Naive thymus-derived CD4-positive, alpha-beta T cell (primary cell): ENCODE measurements at regions of chr3 and their contacts with region 1.

Region 1: GRCh38 chr3:171213907-171214306 is 187.4 kb upstream of the SLC2A2 start:
- DNase-seq: no peak
- ATAC-seq: no peak
- H3K4me3 ChIP-seq: no peak overlapping the region
- H3K4me3 Mint-ChIP-seq: no peak overlapping the region
- H3K27ac ChIP-seq: no peak overlapping the region
- H3K27ac Mint-ChIP-seq: peak overlapping the region in 1 of 9 donors; percentile 71
- H3K4me1 ChIP-seq: peaks cover 0 to 3% of the 10 kb centered on the region in 2 donors
- H3K4me1 Mint-ChIP-seq: peaks cover 10 to 57% (median 39%) of the 10 kb centered on the region in 7 donors
- H3K27me3 ChIP-seq: no peaks in the 10 kb centered on the region
- H3K27me3 Mint-ChIP-seq: no peaks in the 10 kb centered on the region

Region 2: DNA sequence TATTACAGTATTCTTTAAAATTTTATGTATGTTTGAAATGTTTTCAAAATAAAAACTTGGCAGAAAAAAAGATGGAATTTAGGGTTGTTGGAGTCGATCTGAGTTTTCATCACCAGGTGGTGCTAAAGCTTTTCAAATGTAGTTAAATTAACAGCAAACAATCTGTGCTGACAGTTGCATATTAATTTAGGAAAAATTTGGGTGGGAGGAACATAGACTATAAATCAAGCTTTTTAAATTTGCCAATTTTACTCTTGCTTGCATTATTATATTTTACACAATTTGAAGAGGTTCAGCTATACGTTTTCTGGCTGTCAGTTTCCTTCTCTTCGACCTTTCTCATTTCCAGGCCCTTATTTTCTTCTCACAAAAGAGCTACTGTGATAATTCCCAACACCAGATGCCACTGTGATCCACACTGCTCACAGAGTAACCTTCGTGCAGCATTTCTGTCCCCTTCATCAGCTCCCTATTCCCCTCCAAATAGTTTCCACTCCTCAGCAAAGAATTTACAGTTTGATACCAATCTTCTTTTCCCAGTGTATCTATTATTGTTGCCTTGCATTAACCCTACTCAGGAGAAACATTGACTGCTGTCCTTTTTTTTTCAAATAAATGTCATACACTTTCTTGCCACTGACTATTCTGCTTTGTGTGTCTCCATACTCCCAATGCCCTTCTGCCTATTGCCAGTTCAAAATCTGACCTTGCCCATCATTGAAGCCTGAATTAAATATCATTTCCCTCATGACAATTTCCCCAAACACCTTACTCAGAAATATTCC is 252.1 kb before region 1 on chr3:
- CTCF ChIA-PET with region 1: no interaction called
- POLR2A ChIA-PET with region 1: no interaction called
- intact Hi-C with region 1: no loop called
- DNase-seq: peak in 5 of 9 donors; percentile 4 to 20 (median 14)
- ATAC-seq: no peak
- H3K4me3 ChIP-seq: no peak overlapping the region
- H3K4me3 Mint-ChIP-seq: no peak overlapping the region
- H3K27ac ChIP-seq: no peak overlapping the region
- H3K27ac Mint-ChIP-seq: peak overlapping the region in 1 of 9 donors; percentile 23
- H3K4me1 ChIP-seq: no peaks in the 10 kb centered on the region
- H3K4me1 Mint-ChIP-seq: no peaks in the 10 kb centered on the region
- H3K27me3 ChIP-seq: no peaks in the 10 kb centered on the region
- H3K27me3 Mint-ChIP-seq: peaks cover 0 to 23% (median 19%) of the 10 kb centered on the region in 5 donors

Region 3: GRCh38 chr3:171132873-171133272 is 81.0 kb before region 1 on chr3:
- CTCF ChIA-PET with region 1: no interaction called
- POLR2A ChIA-PET with region 1: no interaction called
- intact Hi-C with region 1: no loop called
- DNase-seq: no peak
- ATAC-seq: no peak
- H3K4me3 ChIP-seq: no peak overlapping the region
- H3K4me3 Mint-ChIP-seq: no peak overlapping the region
- H3K27ac ChIP-seq: no peak overlapping the region
- H3K27ac Mint-ChIP-seq: no peak overlapping the region
- H3K4me1 ChIP-seq: no peaks in the 10 kb centered on the region
- H3K4me1 Mint-ChIP-seq: peaks cover 0 to 8% (median 0%) of the 10 kb centered on the region in 7 donors
- H3K27me3 ChIP-seq: no peaks in the 10 kb centered on the region
- H3K27me3 Mint-ChIP-seq: no peaks in the 10 kb centered on the region

Region 4: GRCh38 chr3:171230865-171231264 is 17.0 kb after region 1 on chr3:
- CTCF ChIA-PET with region 1: no interaction called
- POLR2A ChIA-PET with region 1: no interaction called
- intact Hi-C with region 1: loop called in 1 of 2 experiments (anchors 2 kb)
- DNase-seq: no peak
- ATAC-seq: no peak
- H3K4me3 ChIP-seq: no peak overlapping the region
- H3K4me3 Mint-ChIP-seq: peak overlapping the region in 1 of 10 donors; percentile 3
- H3K27ac ChIP-seq: no peak overlapping the region
- H3K27ac Mint-ChIP-seq: peak overlapping the region in 6 of 9 donors; percentile 7 to 83 (median 37)
- H3K4me1 ChIP-seq: no peaks in the 10 kb centered on the region
- H3K4me1 Mint-ChIP-seq: peaks cover 19 to 72% (median 63%) of the 10 kb centered on the region in 7 donors
- H3K27me3 ChIP-seq: no peaks in the 10 kb centered on the region
- H3K27me3 Mint-ChIP-seq: no peaks in the 10 kb centered on the region

Region 5: GRCh38 chr3:171393032-171393744 is 179.3 kb after region 1 on chr3:
- CTCF ChIA-PET with region 1: no interaction called
- POLR2A ChIA-PET with region 1: no interaction called
- intact Hi-C with region 1: no loop called
- DNase-seq: no peak
- ATAC-seq: no peak
- H3K4me3 ChIP-seq: no peak overlapping the region
- H3K4me3 Mint-ChIP-seq: no peak overlapping the region
- H3K27ac ChIP-seq: no peak overlapping the region
- H3K27ac Mint-ChIP-seq: no peak overlapping the region
- H3K4me1 ChIP-seq: peaks cover 0 to 3% of the 10 kb centered on the region in 2 donors
- H3K4me1 Mint-ChIP-seq: peaks cover 13 to 79% (median 62%) of the 10 kb centered on the region in 7 donors
- H3K27me3 ChIP-seq: no peaks in the 10 kb centered on the region
- H3K27me3 Mint-ChIP-seq: no peaks in the 10 kb centered on the region